ENCODE measurements at regions of chr6 and their contacts with region 1.

Region 1: GRCh38 chr6:32622545-32623401 is 14.4 kb upstream of the HLA-DQA1 start:
- DNase-seq: peak; percentile 68
- ATAC-seq: peak; percentile 88
- H3K4me3 Mint-ChIP-seq: peak overlapping the region; percentile 35
- H3K27ac Mint-ChIP-seq: peak overlapping the region; percentile 88
- H3K4me1 Mint-ChIP-seq: peaks cover 50% of the 10 kb centered on the region
- H3K27me3 Mint-ChIP-seq: no peaks in the 10 kb centered on the region

Region 2: DNA sequence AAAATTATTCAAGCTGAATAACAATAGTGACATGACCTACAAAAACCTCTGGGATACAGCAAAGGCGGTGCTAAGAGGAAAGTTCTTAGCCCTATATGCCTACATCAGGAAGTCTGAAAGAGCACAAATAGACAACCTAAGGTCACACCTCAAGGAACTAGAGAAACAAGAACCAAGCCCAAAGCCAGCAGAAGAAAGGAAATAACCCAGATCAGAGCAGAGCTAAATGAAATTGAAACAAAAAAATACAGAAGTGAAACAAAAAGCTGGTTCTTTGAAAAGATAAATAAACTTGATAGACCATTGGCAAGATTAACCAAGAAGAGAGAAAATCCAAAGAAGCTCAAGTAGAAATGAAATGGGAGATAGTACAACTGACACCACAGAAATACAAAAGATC is 351.3 kb before region 1 on chr6:
- CTCF ChIA-PET with region 1: no interaction called
- POLR2A ChIA-PET with region 1: no interaction called
- intact Hi-C with region 1: no loop called
- DNase-seq: no peak
- ATAC-seq: no peak
- H3K4me3 Mint-ChIP-seq: no peak overlapping the region
- H3K27ac Mint-ChIP-seq: peak overlapping the region; percentile 13
- H3K4me1 Mint-ChIP-seq: peaks cover 16% of the 10 kb centered on the region
- H3K27me3 Mint-ChIP-seq: no peaks in the 10 kb centered on the region

Region 3: DNA sequence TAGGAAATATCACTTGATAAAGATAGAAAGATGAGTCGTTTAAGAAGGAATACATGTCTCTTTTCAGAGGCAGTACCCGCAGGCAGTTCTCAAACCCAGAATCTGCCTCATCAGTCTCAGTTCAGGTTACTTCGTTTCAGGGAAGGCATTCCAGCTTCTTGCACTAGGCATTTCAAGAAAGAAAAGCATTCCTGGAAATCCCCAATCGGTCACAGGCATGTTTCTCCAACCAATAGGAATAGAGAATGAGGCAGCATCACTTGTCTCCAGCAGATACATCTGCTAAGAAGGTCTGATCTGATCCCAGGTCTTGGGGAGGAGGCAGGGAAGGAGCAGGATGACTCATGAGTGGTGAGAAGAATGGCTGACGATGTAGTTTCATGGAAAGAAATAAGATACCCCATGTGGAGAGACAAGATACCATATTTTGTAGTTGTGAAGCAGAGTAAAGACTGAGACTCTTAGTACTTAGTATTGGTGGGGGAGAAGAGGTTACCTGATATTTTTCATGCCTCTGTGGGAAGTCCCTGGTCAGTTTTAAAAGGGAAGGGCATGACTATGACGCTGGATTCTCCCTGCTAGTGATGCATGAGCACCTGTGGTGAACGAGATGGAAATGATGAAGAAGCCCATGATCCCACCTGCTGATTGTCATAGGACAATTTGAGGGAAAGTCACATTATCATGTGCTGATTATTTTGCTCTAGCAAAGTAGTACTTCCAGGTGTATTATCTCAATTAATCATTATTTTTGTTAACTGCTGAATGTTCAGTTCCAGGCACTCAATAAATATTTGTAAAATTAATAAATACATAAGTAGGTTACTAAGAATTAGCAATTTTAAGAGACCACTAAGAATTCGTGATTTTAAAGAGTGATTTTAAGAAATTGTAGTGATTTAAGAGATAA is 12.8 kb before region 1 on chr6:
- CTCF ChIA-PET with region 1: interaction called, 3 read pairs
- POLR2A ChIA-PET with region 1: no interaction called
- intact Hi-C with region 1: loop called (anchors 1 kb)
- DNase-seq: peak; percentile 60
- ATAC-seq: peak; percentile 98
- H3K4me3 Mint-ChIP-seq: no peak overlapping the region
- H3K27ac Mint-ChIP-seq: no peak overlapping the region
- H3K4me1 Mint-ChIP-seq: peaks cover 16% of the 10 kb centered on the region
- H3K27me3 Mint-ChIP-seq: peaks cover 6% of the 10 kb centered on the region

Region 4: GRCh38 chr6:32666420-32667300 is 43.9 kb after region 1 on chr6 and contains the start of gene HLA-DQB1:
- CTCF ChIA-PET with region 1: no interaction called
- POLR2A ChIA-PET with region 1: no interaction called
- intact Hi-C with region 1: loop called (anchors 1 to 2 kb)
- DNase-seq: peak; percentile 60
- ATAC-seq: peak; percentile 81
- H3K4me3 Mint-ChIP-seq: peak within 1 kb of the TSS; percentile 68
- H3K27ac Mint-ChIP-seq: peak within 1 kb of the TSS; percentile 58
- H3K4me1 Mint-ChIP-seq: peaks cover 44% of the 10 kb centered on the region
- H3K27me3 Mint-ChIP-seq: peaks cover 18% of the 10 kb centered on the region
- total RNA-seq, gene HLA-DQB1: 2.3 to 3.1 TPM

Region 5: GRCh38 chr6:32685603-32686002 is 62.8 kb after region 1 on chr6:
- CTCF ChIA-PET with region 1: interaction called, 4 read pairs
- POLR2A ChIA-PET with region 1: interaction called, 4 read pairs
- intact Hi-C with region 1: loop called (anchors 1 kb)
- DNase-seq: peak; percentile 17
- ATAC-seq: peak; percentile 91
- H3K4me3 Mint-ChIP-seq: no peak overlapping the region
- H3K27ac Mint-ChIP-seq: no peak overlapping the region
- H3K4me1 Mint-ChIP-seq: peaks cover 25% of the 10 kb centered on the region
- H3K27me3 Mint-ChIP-seq: no peaks in the 10 kb centered on the region

Region 6: GRCh38 chr6:32692019-32692418 is 69.2 kb after region 1 on chr6:
- CTCF ChIA-PET with region 1: interaction called, 9 read pairs
- POLR2A ChIA-PET with region 1: interaction called, 4 read pairs
- intact Hi-C with region 1: loop called in 1 of 2 experiments (anchors 2 kb)
- DNase-seq: peak; percentile 80
- ATAC-seq: peak; percentile 82
- H3K4me3 Mint-ChIP-seq: no peak overlapping the region
- H3K27ac Mint-ChIP-seq: no peak overlapping the region
- H3K4me1 Mint-ChIP-seq: peaks cover 8% of the 10 kb centered on the region
- H3K27me3 Mint-ChIP-seq: peaks cover 16% of the 10 kb centered on the region

Region 7: GRCh38 chr6:32796848-32797776 is 174.3 kb after region 1 on chr6:
- CTCF ChIA-PET with region 1: no interaction called
- POLR2A ChIA-PET with region 1: no interaction called
- intact Hi-C with region 1: loop called (anchors 2 to 5 kb)
- DNase-seq: peak; percentile 87
- ATAC-seq: peak; percentile 68
- H3K4me3 Mint-ChIP-seq: peak overlapping the region; percentile 54
- H3K27ac Mint-ChIP-seq: peak overlapping the region; percentile 43
- H3K4me1 Mint-ChIP-seq: peaks cover 22% of the 10 kb centered on the region
- H3K27me3 Mint-ChIP-seq: peaks cover 27% of the 10 kb centered on the region